Activated naive CD4-positive, alpha-beta T cell treated with anti-CD3 and anti-CD28 coated beads for 36 hours (primary cell): ENCODE measurements at regions of chr18 and their contacts with region 1.

Region 1: GRCh38 chr18:72762515-72763122 is 105.2 kb downstream of the NETO1 start:
- DNase-seq: peak; percentile 5
- H3K4me3 Mint-ChIP-seq: no peak overlapping the region
- H3K27ac Mint-ChIP-seq: no peak overlapping the region
- H3K4me1 Mint-ChIP-seq: no peaks in the 10 kb centered on the region
- H3K27me3 Mint-ChIP-seq: no peaks in the 10 kb centered on the region

Region 2: DNA sequence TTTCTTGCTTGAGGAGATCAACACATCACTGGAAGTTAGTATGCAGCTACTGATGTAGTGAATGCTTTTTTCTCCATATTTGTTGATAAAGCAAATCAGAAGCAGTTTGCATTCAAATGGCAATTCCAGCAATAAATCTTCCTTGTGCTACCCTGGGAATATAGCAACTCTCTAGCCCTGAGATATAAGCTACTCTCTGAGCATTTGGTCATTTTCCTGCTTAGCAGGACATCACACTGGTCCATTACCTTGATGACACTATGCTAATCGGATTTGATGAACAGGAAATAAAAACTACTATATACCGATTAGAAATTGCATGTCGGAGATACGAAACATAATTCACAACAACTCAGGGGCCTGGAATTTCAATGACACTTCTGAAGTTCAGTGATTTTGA is 371.2 kb before region 1 on chr18:
- CTCF ChIA-PET with region 1: no interaction called
- intact Hi-C with region 1: no loop called
- DNase-seq: no peak
- H3K4me3 Mint-ChIP-seq: no peak overlapping the region
- H3K27ac Mint-ChIP-seq: no peak overlapping the region
- H3K4me1 Mint-ChIP-seq: no peaks in the 10 kb centered on the region
- H3K27me3 Mint-ChIP-seq: no peaks in the 10 kb centered on the region

Region 3: DNA sequence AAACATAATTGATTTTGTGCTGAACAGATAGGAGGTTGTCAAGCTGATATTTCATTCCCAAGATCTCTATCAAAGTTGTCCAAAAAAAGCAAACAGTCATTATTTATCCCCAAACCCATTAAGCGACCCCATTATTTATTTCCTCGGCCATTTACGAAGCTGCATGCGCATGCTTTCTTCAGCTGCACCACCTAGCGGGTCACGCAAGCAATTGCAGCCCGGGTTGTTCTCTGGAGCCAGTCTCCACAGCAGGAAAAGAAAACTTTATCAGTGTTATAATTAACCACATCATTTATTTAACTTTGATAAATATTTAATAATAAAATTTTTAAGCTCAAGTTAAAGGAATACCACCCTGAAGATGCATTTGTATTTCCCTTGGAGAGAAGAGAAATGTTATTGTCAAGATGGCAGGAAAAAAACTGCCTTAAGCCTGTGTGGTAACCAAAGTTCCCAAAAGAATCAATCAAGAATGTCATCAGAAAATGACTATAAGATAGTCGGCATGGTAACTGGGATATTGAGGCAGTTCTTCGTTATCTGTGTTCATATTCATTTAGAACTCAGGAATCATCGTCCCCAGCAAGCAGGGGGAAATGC is 1080.3 kb after region 1 on chr18:
- CTCF ChIA-PET with region 1: interaction called, 4 read pairs
- intact Hi-C with region 1: loop called (anchors 1 kb)
- DNase-seq: peak; percentile 57
- H3K4me3 Mint-ChIP-seq: no peak overlapping the region
- H3K27ac Mint-ChIP-seq: no peak overlapping the region
- H3K4me1 Mint-ChIP-seq: peaks cover 4% of the 10 kb centered on the region
- H3K27me3 Mint-ChIP-seq: peaks cover 6% of the 10 kb centered on the region